ENCODE measurements at regions of chr4 and their contacts with region 1.

Region 1: GRCh38 chr4:99054428-99054994 is 34.1 kb downstream of the ADH5 start:
- DNase-seq: no peak
- H3K4me3 ChIP-seq: no peak overlapping the region
- H3K27ac ChIP-seq: no peak overlapping the region
- H3K27me3 ChIP-seq: no peaks in the 10 kb centered on the region
- CTCF ChIP-seq: no peak

Region 2: GRCh38 chr4:98113012-98113411 is 941.5 kb before region 1 on chr4:
- CTCF ChIA-PET with region 1: interaction called, 11 read pairs
- POLR2A ChIA-PET with region 1: no interaction called
- DNase-seq: no peak
- H3K4me3 ChIP-seq: no peak overlapping the region
- H3K27ac ChIP-seq: no peak overlapping the region
- H3K27me3 ChIP-seq: no peaks in the 10 kb centered on the region
- CTCF ChIP-seq: peak; percentile 39

Region 3: DNA sequence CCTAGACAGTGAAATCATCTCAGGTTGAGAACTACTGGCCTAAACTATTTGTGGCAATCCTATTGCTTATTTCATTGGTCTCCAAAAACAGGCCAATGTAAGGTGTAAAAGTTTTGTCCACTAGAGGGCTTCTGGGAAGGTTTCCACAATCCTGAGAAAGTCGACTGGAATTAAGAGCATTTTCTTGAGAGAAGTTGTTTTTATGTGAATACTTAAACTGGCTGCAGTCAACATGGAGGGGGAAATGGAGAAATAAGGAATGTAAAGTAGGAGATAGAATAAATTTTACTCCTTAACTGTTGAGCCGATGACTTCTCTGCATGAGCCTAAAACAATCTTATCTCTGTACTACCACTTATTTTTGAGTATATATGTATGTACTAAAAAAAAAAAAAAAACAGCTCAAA is 114.6 kb before region 1 on chr4:
- CTCF ChIA-PET with region 1: interaction called, 35 read pairs
- POLR2A ChIA-PET with region 1: no interaction called
- DNase-seq: peak; percentile 58
- H3K4me3 ChIP-seq: no peak overlapping the region
- H3K27ac ChIP-seq: no peak overlapping the region
- H3K27me3 ChIP-seq: no peaks in the 10 kb centered on the region
- CTCF ChIP-seq: peak; percentile 86

Region 4: GRCh38 chr4:99002279-99002678 is 52.2 kb before region 1 on chr4:
- CTCF ChIA-PET with region 1: interaction called, 14 read pairs
- POLR2A ChIA-PET with region 1: no interaction called
- DNase-seq: no peak
- H3K4me3 ChIP-seq: no peak overlapping the region
- H3K27ac ChIP-seq: no peak overlapping the region
- H3K27me3 ChIP-seq: no peaks in the 10 kb centered on the region
- CTCF ChIP-seq: no peak

Region 5: DNA sequence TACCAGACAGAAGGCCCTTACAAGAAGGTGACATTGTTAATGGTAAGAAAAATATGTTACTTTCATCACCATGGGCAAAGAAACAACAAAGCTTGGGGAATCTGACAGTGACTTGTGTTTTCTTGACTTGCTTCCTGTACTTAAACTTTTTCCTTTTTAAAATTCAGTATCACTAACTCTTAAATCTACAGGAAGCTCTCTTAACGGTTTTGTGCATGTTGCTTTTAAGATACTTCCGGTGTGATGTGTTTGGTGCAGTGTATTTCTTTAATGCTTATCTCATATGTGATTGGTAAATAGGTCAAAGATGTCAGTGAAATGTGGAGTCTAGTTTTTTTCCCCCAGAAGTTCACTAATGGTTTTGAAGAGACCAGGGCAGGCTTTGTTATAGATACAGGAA is 11.2 kb before region 1 on chr4:
- CTCF ChIA-PET with region 1: interaction called, 39 read pairs
- POLR2A ChIA-PET with region 1: interaction called, 3 read pairs
- DNase-seq: no peak
- H3K4me3 ChIP-seq: no peak overlapping the region
- H3K27ac ChIP-seq: no peak overlapping the region
- H3K27me3 ChIP-seq: no peaks in the 10 kb centered on the region
- CTCF ChIP-seq: no peak

Region 6: GRCh38 chr4:99117876-99118693 is 63.6 kb after region 1 on chr4:
- CTCF ChIA-PET with region 1: no interaction called
- POLR2A ChIA-PET with region 1: no interaction called
- DNase-seq: no peak
- H3K4me3 ChIP-seq: no peak overlapping the region
- H3K27ac ChIP-seq: no peak overlapping the region
- H3K27me3 ChIP-seq: no peaks in the 10 kb centered on the region
- CTCF ChIP-seq: peak; percentile 45; the same call in 1 of the 2 replicates

Region 7: GRCh38 chr4:99300934-99301333 is 246.4 kb after region 1 on chr4:
- CTCF ChIA-PET with region 1: no interaction called
- POLR2A ChIA-PET with region 1: no interaction called
- DNase-seq: peak; percentile 95
- H3K4me3 ChIP-seq: no peak overlapping the region
- H3K27ac ChIP-seq: no peak overlapping the region
- H3K27me3 ChIP-seq: no peaks in the 10 kb centered on the region
- CTCF ChIP-seq: no peak